Activated CD8-positive, alpha-beta T cell treated with anti-CD3 and anti-CD28 coated beads, Interleukin-2, amount 10 ng/mL, durations not matched to agents 7 days and 5 days (primary cell): ENCODE measurements at regions of chr5 and their contacts with region 1.

Region 1: GRCh38 chr5:134176511-134177368 is at the start of gene SKP1:
- DNase-seq: peak; percentile 86
- ATAC-seq: peak; percentile 88
- H3K4me3 Mint-ChIP-seq: peak within 1 kb of the TSS; percentile 84
- H3K27ac Mint-ChIP-seq: peak within 1 kb of the TSS; percentile 98
- H3K4me1 Mint-ChIP-seq: peaks cover 28% of the 10 kb centered on the region
- H3K27me3 Mint-ChIP-seq: no peaks in the 10 kb centered on the region
- total RNA-seq, gene SKP1: 203 to 206 TPM

Region 2: DNA sequence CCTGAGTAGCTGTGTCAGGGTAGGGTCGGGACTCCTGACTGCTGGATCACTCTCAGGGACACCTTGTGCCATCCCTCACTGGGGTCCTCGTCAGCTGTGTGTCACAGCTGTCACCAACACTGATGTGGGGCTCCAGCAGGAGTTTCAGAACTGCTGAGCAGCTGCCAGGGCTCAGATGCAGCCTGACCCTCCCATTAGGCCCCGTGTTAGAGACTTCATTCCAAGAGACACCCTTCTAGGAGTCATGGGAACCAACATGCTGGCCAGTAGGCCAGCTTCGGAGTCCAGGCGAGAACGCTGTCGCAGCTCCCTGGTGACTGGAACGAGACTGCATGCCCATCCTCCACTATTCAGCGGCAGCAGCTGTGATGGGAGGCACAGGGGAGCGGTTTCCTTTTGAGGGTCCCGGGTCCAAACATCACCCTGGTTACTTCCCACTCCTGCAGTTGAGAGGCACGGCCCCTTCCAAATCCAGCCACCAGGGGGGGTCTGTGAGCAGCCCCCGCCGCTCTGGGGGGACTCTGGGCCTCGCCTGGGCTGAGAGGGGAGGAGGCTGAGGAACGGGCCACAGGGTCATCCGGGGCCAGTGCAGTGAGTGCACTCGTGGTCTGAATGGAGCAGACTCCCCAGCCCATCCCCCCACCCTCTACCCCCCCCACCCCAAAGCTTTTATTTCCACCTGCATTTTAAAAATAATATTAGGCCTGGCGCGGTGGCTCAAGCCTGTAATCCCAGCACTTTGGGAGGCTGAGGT is 74.9 kb before region 1 on chr5:
- CTCF ChIA-PET with region 1: no interaction called
- POLR2A ChIA-PET with region 1: interaction called, 10 read pairs
- DNase-seq: peak; percentile 83
- ATAC-seq: peak; percentile 53
- H3K4me3 Mint-ChIP-seq: no peak overlapping the region
- H3K27ac Mint-ChIP-seq: no peak overlapping the region
- H3K4me1 Mint-ChIP-seq: peaks cover 87% of the 10 kb centered on the region
- H3K27me3 Mint-ChIP-seq: no peaks in the 10 kb centered on the region

Region 3: GRCh38 chr5:134132372-134133034 is 44.2 kb before region 1 on chr5:
- CTCF ChIA-PET with region 1: no interaction called
- POLR2A ChIA-PET with region 1: interaction called, 13 read pairs
- DNase-seq: peak; percentile 89
- ATAC-seq: peak; percentile 68
- H3K4me3 Mint-ChIP-seq: peak overlapping the region; percentile 55
- H3K27ac Mint-ChIP-seq: peak overlapping the region; percentile 91
- H3K4me1 Mint-ChIP-seq: peaks cover 97% of the 10 kb centered on the region
- H3K27me3 Mint-ChIP-seq: no peaks in the 10 kb centered on the region

Region 4: DNA sequence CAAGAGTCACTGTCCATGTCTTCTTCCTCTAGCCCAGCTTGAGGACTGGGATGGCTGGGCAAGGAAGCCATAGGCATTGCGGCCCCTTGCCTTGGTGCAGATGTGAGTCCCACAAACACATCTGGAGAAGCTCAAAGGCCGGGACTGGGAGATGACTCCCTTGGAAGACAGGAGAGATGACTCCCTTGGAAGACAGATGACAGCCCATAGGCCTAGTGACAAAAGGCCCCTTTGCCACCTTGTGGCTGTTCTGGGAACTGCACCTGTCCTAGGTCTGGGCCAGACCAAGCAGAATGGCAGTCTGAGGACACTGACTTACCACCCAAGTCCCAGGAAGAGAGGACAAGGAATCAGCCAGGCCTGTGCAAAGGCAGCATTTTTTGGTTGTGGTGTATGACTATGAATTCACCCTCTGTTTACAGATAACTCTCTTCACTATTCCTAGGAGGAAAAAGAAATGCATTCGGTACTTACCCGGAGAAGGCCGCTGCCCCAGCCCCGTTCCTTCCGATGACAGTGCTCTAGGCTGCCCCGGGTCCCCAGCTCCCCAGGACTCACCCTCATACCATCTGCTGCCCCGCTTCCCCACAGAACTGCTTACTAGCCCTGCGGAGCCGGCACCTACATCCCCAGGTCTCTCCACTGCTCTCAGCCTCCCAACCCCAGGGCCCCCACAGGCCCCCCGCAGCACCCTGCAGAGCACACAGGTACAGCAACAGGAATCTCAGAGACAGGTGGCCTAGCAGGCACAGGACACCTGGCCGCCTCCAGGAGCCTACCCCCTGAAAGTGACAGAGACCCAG is 30.8 kb before region 1 on chr5:
- CTCF ChIA-PET with region 1: interaction called, 4 read pairs
- POLR2A ChIA-PET with region 1: interaction called, 23 read pairs
- DNase-seq: peak; percentile 87
- ATAC-seq: peak; percentile 77
- H3K4me3 Mint-ChIP-seq: no peak overlapping the region
- H3K27ac Mint-ChIP-seq: no peak overlapping the region
- H3K4me1 Mint-ChIP-seq: peaks cover 31% of the 10 kb centered on the region
- H3K27me3 Mint-ChIP-seq: no peaks in the 10 kb centered on the region

Region 5: GRCh38 chr5:134161513-134162395 is 15.0 kb before region 1 on chr5:
- CTCF ChIA-PET with region 1: interaction called, 3 read pairs
- POLR2A ChIA-PET with region 1: interaction called, 14 read pairs
- DNase-seq: no peak
- ATAC-seq: no peak
- H3K4me3 Mint-ChIP-seq: no peak overlapping the region
- H3K27ac Mint-ChIP-seq: no peak overlapping the region
- H3K4me1 Mint-ChIP-seq: peaks cover 5% of the 10 kb centered on the region
- H3K27me3 Mint-ChIP-seq: no peaks in the 10 kb centered on the region

Region 6: GRCh38 chr5:134225618-134226440 is 49.1 kb after region 1 on chr5 and contains the start of gene PPP2CA:
- CTCF ChIA-PET with region 1: no interaction called
- POLR2A ChIA-PET with region 1: interaction called, 78 read pairs
- DNase-seq: peak; percentile 99
- ATAC-seq: peak; percentile 88
- H3K4me3 Mint-ChIP-seq: peak within 1 kb of the TSS; percentile 96
- H3K27ac Mint-ChIP-seq: peak within 1 kb of the TSS; percentile 99
- H3K4me1 Mint-ChIP-seq: peaks cover 41% of the 10 kb centered on the region
- H3K27me3 Mint-ChIP-seq: no peaks in the 10 kb centered on the region
- total RNA-seq, gene PPP2CA: 158 to 167 TPM